ENCODE measurements at regions of chr2 and their contacts with region 1.

Region 1: GRCh38 chr2:73828818-73829570 is at the start of gene STAMBP:
- DNase-seq: peak; percentile 72
- H3K4me3 ChIP-seq: peak within 1 kb of the TSS; percentile 82
- CTCF ChIP-seq: no peak

Region 2: GRCh38 chr2:73812635-73813034 is 16.4 kb before region 1 on chr2:
- CTCF ChIA-PET with region 1: interaction called, 22 read pairs
- POLR2A ChIA-PET with region 1: no interaction called
- DNase-seq: no peak
- H3K4me3 ChIP-seq: no peak overlapping the region
- CTCF ChIP-seq: no peak

Region 3: DNA sequence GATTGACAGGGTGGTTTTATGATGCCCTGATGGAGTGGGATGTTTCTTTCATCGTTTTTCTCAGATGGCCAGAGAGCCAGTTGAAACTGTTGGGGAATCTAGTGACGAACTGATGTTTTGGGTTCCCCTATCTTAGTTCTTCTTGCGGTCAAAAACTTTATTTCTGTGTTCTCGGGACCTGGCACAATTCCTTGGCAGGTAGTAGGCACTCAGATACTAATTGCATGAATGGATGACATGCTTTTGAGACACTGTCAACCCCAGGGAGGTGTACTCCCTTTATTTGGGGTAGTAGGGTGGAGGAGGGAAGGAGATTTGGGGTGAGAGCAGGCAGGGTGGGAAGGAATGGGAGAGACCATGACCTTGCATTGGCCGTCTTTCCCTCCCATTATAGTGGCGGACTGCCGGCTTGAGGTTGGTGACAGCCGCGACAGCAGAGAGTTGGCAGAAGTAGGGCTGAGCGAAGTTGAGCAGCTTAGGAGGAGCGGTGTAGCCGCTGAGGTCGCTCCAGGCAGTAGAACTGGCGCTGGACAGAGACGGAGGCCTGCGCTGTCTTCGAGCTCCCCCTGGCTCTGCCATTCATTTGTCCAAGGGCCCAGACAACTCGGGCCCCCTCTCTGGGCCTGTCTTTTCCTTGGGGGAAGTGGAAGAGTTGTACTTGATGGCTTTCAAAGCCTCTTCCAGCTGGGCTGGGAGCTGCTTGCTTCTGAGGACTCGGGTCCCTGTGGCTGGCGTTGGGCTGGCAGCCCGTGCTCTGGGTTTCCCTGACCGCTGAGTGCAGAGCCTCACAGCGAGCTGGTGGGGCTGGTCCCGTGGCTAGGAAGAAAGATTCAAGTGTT is 158.3 kb after region 1 on chr2:
- CTCF ChIA-PET with region 1: interaction called, 11 read pairs
- POLR2A ChIA-PET with region 1: no interaction called
- DNase-seq: no peak
- H3K4me3 ChIP-seq: peak overlapping the region; percentile 20
- CTCF ChIP-seq: peak; percentile 40

Region 4: GRCh38 chr2:74104839-74105238 is 275.8 kb after region 1 on chr2:
- CTCF ChIA-PET with region 1: interaction called, 66 read pairs
- POLR2A ChIA-PET with region 1: no interaction called
- DNase-seq: no peak
- H3K4me3 ChIP-seq: no peak overlapping the region
- CTCF ChIP-seq: no peak

Region 5: DNA sequence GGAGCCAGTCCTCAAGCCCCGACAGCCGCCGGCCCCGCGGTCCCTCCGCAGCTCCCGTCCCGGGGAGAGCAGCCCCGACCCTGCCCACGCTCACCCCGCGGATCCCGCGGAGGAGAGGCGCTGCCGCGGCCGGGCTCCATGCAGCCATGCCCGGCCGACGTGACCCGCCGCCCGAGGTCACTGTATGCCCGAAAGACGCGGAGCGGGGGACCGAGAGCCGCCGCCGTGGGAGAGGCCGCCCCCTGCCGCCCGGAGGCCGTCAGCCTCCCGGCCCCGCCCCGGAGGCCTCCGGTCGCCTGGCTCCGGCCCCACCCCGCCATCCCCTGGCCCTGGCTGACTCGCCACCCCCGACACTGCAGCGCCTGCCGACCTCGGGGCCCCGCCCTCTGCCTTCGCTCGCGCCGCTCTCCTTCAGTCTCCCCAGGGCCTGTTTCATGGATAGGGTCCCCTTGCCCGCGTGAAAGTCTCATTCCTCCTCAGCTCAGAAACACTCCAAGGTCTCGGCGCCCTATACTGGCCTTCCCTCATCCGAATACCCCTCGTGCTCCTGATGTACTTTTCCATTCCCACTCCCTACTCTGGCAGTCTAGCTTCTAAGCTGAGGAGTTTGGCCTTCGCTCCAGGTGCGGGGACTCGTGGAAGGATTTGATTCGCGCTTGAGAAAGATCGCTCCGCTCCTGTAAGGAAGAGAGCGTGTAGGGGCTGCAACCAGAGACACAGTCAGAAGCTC is 318.9 kb after region 1 on chr2 and contains the start of gene BOLA3:
- CTCF ChIA-PET with region 1: interaction called, 221 read pairs
- POLR2A ChIA-PET with region 1: interaction called, 3 read pairs
- DNase-seq: no peak
- H3K4me3 ChIP-seq: peak within 1 kb of the TSS; percentile 74
- CTCF ChIP-seq: peak; percentile 63

Region 6: GRCh38 chr2:74250189-74250631 is 421.2 kb after region 1 on chr2:
- CTCF ChIA-PET with region 1: interaction called, 20 read pairs
- POLR2A ChIA-PET with region 1: no interaction called
- DNase-seq: no peak
- H3K4me3 ChIP-seq: no peak overlapping the region
- CTCF ChIP-seq: peak; percentile 67

Measured in AG04449 (cell line).